Left lung (tissue), 14 donors: ENCODE measurements at regions of chr1 and their contacts with region 1.

Region 1: DNA sequence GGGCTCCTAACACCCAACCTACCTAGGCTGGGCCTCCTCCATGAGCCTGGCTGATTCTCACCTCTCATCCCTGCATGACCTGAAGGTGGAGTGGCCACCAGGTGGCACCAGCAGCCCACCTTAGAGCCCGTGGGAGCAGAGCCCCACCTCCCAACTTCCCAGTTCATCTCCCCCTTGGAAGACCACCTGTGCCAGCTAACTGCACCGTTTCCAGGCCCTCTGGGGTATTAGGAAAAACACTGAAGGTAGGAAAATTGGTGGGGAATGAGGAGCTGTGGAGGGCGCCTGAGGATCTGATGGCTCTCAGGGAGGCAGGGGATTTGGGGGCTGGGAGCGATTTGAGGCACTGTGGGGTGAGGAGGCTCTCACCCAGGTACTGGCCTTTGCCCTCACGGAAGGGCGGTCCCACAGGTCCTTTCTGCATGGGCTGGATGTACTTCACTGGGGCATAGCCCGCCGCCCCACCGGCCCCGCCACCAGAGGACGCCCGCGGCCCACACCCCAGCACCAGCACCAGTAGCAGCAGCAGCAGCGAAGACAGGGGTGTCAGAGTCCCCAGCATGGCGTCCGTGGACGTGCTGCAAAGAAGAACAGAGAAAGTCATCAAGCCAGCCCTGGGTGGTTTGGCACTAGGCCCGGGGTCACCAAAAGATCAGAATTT is 11.1 kb downstream of the ADPRS start:
- DNase-seq: peak; percentile 54 to 93 (median 78)
- ATAC-seq: peak; percentile 87
- H3K4me3 ChIP-seq: no peak overlapping the region
- H3K27ac ChIP-seq: no peak overlapping the region
- H3K4me1 ChIP-seq: peaks cover 8 to 29% of the 10 kb centered on the region in 2 donors
- H3K27me3 ChIP-seq: no peaks in the 10 kb centered on the region
- CTCF ChIP-seq: peak; percentile 81 to 90

Region 2: GRCh38 chr1:35971601-35972000 is 128.2 kb before region 1 on chr1:
- intact Hi-C with region 1: no loop called
- DNase-seq: no peak
- ATAC-seq: no peak
- H3K4me3 ChIP-seq: no peak overlapping the region
- H3K27ac ChIP-seq: no peak overlapping the region
- H3K4me1 ChIP-seq: no peaks in the 10 kb centered on the region
- H3K27me3 ChIP-seq: no peaks in the 10 kb centered on the region
- CTCF ChIP-seq: no peak

Region 3: DNA sequence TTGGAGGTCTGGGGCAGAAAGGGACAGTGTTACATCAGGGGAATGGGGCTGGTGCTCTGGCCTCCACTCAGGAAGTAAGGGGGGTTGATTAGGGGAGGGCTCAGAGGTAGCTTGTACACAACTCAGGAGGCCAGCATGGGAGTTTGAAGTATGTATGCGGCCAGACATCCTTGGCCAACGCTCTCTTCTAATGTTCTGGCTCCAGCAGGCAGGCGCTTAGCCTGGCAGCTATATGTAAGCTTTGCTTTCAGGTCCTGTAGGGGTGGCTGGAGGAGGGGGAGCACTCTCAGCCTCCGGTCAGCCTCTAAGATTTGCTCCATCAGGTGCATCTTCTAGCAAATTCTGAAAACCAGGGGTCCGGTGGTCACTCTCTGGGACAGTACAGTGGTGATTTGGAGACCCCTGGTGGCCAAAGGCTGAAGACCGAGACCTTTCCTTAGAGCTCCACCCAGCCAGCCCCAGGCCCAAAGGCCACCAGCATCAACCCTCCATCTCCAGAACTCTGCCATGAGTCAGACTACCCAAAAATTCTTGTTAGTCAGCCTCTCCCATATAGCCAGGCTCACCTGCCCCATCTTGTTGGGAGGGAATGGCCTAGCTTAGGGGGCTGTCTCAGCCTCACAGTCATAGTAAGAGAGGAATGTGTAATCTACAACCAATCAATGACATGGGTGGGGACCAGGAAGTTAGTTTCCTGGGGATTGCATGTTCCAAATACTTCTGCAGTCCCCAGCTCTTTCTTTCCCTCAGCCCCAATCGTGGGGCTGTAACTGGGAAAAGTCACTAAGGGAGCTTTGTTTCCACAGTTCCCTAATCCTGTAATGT is 34.9 kb after region 1 on chr1:
- intact Hi-C with region 1: loop called in 1 of 2 experiments (anchors 2 kb)
- DNase-seq: peak in 1 of 4 donors; percentile 67
- ATAC-seq: peak; percentile 66
- H3K4me3 ChIP-seq: no peak overlapping the region
- H3K27ac ChIP-seq: peak overlapping the region; percentile 29 to 64
- H3K4me1 ChIP-seq: peaks cover 9 to 34% of the 10 kb centered on the region in 2 donors
- H3K27me3 ChIP-seq: no peaks in the 10 kb centered on the region
- CTCF ChIP-seq: peak; percentile 62 to 65